HEK293 (cell line): ENCODE measurements at regions of chr1 and their contacts with region 1.

Region 1: GRCh38 chr1:218377143-218377660 is 32.1 kb downstream of the TGFB2 start:
- H3K4me3 ChIP-seq: peak overlapping the region; percentile 1; the same call in 1 of the 2 replicates
- H3K27ac ChIP-seq: no peak overlapping the region; the same call in 1 of the 2 replicates
- H3K4me1 ChIP-seq: peaks cover 25% of the 10 kb centered on the region
- CTCF ChIP-seq: no peak

Region 2: DNA sequence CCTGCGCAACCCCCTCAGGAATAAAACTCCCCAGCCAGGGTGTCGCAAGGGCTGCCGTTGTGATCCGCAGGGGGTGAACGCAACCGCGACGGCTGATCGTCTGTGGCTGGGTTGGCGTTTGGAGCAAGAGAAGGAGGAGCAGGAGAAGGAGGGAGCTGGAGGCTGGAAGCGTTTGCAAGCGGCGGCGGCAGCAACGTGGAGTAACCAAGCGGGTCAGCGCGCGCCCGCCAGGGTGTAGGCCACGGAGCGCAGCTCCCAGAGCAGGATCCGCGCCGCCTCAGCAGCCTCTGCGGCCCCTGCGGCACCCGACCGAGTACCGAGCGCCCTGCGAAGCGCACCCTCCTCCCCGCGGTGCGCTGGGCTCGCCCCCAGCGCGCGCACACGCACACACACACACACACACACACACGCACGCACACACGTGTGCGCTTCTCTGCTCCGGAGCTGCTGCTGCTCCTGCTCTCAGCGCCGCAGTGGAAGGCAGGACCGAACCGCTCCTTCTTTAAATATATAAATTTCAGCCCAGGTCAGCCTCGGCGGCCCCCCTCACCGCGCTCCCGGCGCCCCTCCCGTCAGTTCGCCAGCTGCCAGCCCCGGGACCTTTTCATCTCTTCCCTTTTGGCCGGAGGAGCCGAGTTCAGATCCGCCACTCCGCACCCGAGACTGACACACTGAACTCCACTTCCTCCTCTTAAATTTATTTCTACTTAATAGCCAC is 31.4 kb before region 1 on chr1:
- CTCF ChIA-PET with region 1: interaction called, 3 read pairs
- POLR2A ChIA-PET with region 1: interaction called, 11 read pairs
- H3K4me3 ChIP-seq: peak overlapping the region; percentile 64
- H3K27ac ChIP-seq: peak overlapping the region; percentile 59; the same call in 1 of the 2 replicates
- H3K4me1 ChIP-seq: peaks cover 3% of the 10 kb centered on the region
- CTCF ChIP-seq: no peak; the same call in none of the 2 replicates

Region 3: GRCh38 chr1:218412171-218412570 is 35.0 kb after region 1 on chr1:
- CTCF ChIA-PET with region 1: no interaction called
- POLR2A ChIA-PET with region 1: no interaction called
- H3K4me3 ChIP-seq: no peak overlapping the region
- H3K27ac ChIP-seq: no peak overlapping the region
- H3K4me1 ChIP-seq: no peaks in the 10 kb centered on the region
- CTCF ChIP-seq: no peak

Region 4: GRCh38 chr1:218529646-218530310 is 152.6 kb after region 1 on chr1:
- CTCF ChIA-PET with region 1: no interaction called
- POLR2A ChIA-PET with region 1: no interaction called
- H3K4me3 ChIP-seq: no peak overlapping the region
- H3K27ac ChIP-seq: no peak overlapping the region
- H3K4me1 ChIP-seq: peaks cover 5% of the 10 kb centered on the region; the same call in 1 of the 2 replicates
- CTCF ChIP-seq: no peak

Region 5: DNA sequence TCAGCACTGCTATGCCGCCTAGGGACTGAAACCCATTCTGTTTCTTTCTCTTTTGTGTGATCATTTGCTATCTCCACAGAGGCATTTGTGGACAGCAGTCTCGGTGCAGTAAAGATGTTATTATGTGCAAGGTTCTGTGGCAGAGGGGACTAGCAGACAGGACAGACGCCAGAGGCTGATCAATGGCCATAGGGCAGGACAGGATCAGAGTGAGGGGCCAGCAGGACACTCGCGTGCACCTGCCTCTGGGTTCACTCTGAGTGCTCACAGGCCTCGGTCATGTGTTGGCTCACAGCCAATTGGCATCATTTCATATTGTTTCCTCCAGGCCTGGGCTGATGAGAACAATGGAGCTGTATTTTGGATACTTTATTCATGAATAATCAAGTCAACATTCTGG is 180.5 kb after region 1 on chr1:
- CTCF ChIA-PET with region 1: no interaction called
- POLR2A ChIA-PET with region 1: no interaction called
- H3K4me3 ChIP-seq: no peak overlapping the region
- H3K27ac ChIP-seq: no peak overlapping the region
- H3K4me1 ChIP-seq: no peaks in the 10 kb centered on the region
- CTCF ChIP-seq: no peak